ENCODE measurements at regions of chr15 and their contacts with region 1.

Region 1: GRCh38 chr15:67839929-67840748 is at the start of gene RNU6-1:
- DNase-seq: peak; percentile 92 to 97 (median 96)
- ATAC-seq: peak; percentile 78
- H3K4me3 ChIP-seq: peak within 1 kb of the TSS; percentile 87 to 89
- H3K4me3 Mint-ChIP-seq: peak within 1 kb of the TSS; percentile 91
- H3K27ac ChIP-seq: peak within 1 kb of the TSS; percentile 91 to 94
- H3K27ac Mint-ChIP-seq: peak within 1 kb of the TSS; percentile 97
- H3K4me1 ChIP-seq: peaks cover 31% of the 10 kb centered on the region
- H3K4me1 Mint-ChIP-seq: peaks cover 34% of the 10 kb centered on the region
- H3K27me3 ChIP-seq: peaks cover 11% of the 10 kb centered on the region in 2 experiments
- H3K27me3 Mint-ChIP-seq: peaks cover 5% of the 10 kb centered on the region
- CTCF ChIP-seq: no peak
- total RNA-seq, gene RNU6-1: not detected

Region 2: DNA sequence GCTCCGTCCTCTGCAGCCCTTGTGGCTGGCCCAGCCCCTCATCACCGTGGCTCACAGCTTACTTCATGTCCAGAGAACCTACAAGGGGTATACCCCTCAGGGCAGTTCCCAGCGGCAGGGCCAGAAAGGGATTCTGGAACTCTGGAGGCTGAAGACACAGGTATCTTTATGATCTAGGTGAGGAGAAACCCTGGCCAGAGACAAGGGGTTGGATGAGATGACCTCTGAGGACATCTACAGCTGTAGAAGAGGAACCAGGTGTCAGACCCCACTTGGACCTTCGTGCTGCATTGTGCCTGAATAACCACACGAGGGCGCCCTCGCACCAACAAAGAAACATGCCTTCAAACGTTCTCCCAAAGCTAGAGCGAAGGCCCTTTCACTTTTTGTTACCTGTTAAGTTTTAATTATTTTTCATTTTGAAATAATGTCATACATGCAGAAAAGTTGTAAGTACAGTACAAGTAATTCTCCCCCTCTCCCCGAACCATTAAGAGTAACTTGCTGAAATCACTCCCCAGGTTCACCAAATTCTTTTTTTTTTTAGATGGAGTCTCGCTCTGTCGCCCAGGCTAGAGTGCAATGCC is 893.5 kb before region 1 on chr15:
- CTCF ChIA-PET with region 1: interaction called, 7 read pairs
- POLR2A ChIA-PET with region 1: no interaction called
- intact Hi-C with region 1: loop called (anchors 2 to 5 kb)
- DNase-seq: peak; percentile 56 to 89 (median 74)
- ATAC-seq: peak; percentile 82
- H3K4me3 ChIP-seq: no peak overlapping the region
- H3K4me3 Mint-ChIP-seq: no peak overlapping the region
- H3K27ac ChIP-seq: no peak overlapping the region
- H3K27ac Mint-ChIP-seq: no peak overlapping the region
- H3K4me1 ChIP-seq: no peaks in the 10 kb centered on the region
- H3K4me1 Mint-ChIP-seq: peaks cover 3% of the 10 kb centered on the region
- H3K27me3 ChIP-seq: peaks cover 0 to 2% of the 10 kb centered on the region in 2 experiments
- H3K27me3 Mint-ChIP-seq: no peaks in the 10 kb centered on the region
- CTCF ChIP-seq: peak; percentile 97

Region 3: GRCh38 chr15:67456677-67457529 is 383.2 kb before region 1 on chr15:
- CTCF ChIA-PET with region 1: interaction called, 98 read pairs
- POLR2A ChIA-PET with region 1: interaction called, 6 read pairs
- intact Hi-C with region 1: loop called (anchors 1 kb)
- DNase-seq: peak; percentile 65 to 89 (median 81)
- ATAC-seq: peak; percentile 94
- H3K4me3 ChIP-seq: no peak overlapping the region
- H3K4me3 Mint-ChIP-seq: no peak overlapping the region
- H3K27ac ChIP-seq: no peak overlapping the region
- H3K27ac Mint-ChIP-seq: no peak overlapping the region
- H3K4me1 ChIP-seq: no peaks in the 10 kb centered on the region
- H3K4me1 Mint-ChIP-seq: peaks cover 3% of the 10 kb centered on the region
- H3K27me3 ChIP-seq: no peaks in the 10 kb centered on the region
- H3K27me3 Mint-ChIP-seq: no peaks in the 10 kb centered on the region
- CTCF ChIP-seq: peak; percentile 80

Region 4: GRCh38 chr15:67521029-67521811 is 318.9 kb before region 1 on chr15 and contains the start of gene C15orf61:
- CTCF ChIA-PET with region 1: interaction called, 4 read pairs
- POLR2A ChIA-PET with region 1: no interaction called
- intact Hi-C with region 1: loop called (anchors 1 to 5 kb)
- DNase-seq: peak; percentile 61 to 94 (median 84)
- ATAC-seq: peak; percentile 82
- H3K4me3 ChIP-seq: peak within 1 kb of the TSS; percentile 92 to 95
- H3K4me3 Mint-ChIP-seq: peak within 1 kb of the TSS; percentile 93
- H3K27ac ChIP-seq: peak within 1 kb of the TSS; percentile 72 to 92
- H3K27ac Mint-ChIP-seq: peak within 1 kb of the TSS; percentile 94
- H3K4me1 ChIP-seq: peaks cover 14% of the 10 kb centered on the region
- H3K4me1 Mint-ChIP-seq: peaks cover 36% of the 10 kb centered on the region
- H3K27me3 ChIP-seq: no peaks in the 10 kb centered on the region
- H3K27me3 Mint-ChIP-seq: no peaks in the 10 kb centered on the region
- CTCF ChIP-seq: no peak
- total RNA-seq, gene C15orf61: 11.2 to 14.4 TPM

Region 5: DNA sequence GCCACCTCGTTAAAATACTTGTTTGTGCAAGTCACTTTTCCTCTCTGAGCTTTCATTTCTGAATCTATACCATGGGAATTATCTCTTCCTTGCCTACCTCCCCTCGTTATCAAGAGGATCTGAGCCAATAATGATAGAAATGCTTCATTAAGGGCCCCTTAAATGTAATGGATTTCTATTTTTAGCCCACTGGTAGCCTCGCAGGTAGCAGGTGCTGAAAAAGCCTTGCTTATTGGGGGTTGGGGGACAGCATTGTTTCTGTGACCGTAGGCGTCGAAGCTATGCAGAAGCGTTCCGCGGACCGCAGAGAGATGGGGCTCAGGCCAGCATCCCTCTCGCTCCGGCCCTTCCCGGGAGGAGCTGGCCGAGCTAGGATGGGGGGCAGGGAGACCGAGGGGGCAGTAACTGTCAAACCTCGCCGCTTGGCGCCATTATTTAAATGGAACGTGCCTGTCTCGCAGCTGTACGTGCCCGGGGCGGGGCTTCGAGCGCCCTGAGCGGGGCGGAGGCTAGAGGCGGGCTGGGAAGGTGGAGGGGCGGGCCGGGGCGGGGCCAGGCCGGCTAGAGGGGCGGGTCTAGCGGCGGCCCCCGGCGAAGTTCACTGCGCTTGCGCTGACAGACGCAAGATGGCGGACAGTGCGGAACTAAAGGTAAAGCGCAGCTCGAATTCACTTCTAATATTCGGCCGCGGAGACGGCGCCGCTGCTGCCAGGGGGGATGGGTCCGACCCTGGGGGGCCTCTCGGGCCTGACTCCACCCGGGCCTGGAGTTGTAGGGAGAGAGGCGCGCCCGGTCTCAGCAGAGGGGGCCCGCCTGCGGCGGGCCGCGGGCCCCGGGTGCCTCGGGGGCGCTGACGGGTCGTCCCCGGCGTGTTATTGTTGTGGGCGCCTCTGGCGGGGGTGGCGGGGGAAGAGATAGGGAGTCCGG is 213.8 kb after region 1 on chr15 and contains the start of gene PIAS1:
- CTCF ChIA-PET with region 1: no interaction called
- POLR2A ChIA-PET with region 1: interaction called, 3 read pairs
- intact Hi-C with region 1: loop called in 1 of 2 experiments (anchors 2 kb)
- DNase-seq: peak; percentile 87 to 96 (median 93)
- ATAC-seq: peak; percentile 90
- H3K4me3 ChIP-seq: peak within 1 kb of the TSS; percentile 84 to 96
- H3K4me3 Mint-ChIP-seq: peak within 1 kb of the TSS; percentile 95
- H3K27ac ChIP-seq: peak within 1 kb of the TSS; percentile 79 to 85
- H3K27ac Mint-ChIP-seq: peak within 1 kb of the TSS; percentile 96
- H3K4me1 ChIP-seq: peaks cover 37% of the 10 kb centered on the region
- H3K4me1 Mint-ChIP-seq: peaks cover 47% of the 10 kb centered on the region
- H3K27me3 ChIP-seq: no peaks in the 10 kb centered on the region
- H3K27me3 Mint-ChIP-seq: peaks cover 2% of the 10 kb centered on the region
- CTCF ChIP-seq: no peak
- total RNA-seq, gene PIAS1: 73.9 to 78.5 TPM

Region 6: GRCh38 chr15:68130851-68131250 is 290.7 kb after region 1 on chr15:
- CTCF ChIA-PET with region 1: no interaction called
- POLR2A ChIA-PET with region 1: no interaction called
- intact Hi-C with region 1: no loop called
- DNase-seq: no peak
- ATAC-seq: no peak
- H3K4me3 ChIP-seq: no peak overlapping the region
- H3K4me3 Mint-ChIP-seq: no peak overlapping the region
- H3K27ac ChIP-seq: no peak overlapping the region
- H3K27ac Mint-ChIP-seq: no peak overlapping the region
- H3K4me1 ChIP-seq: no peaks in the 10 kb centered on the region
- H3K4me1 Mint-ChIP-seq: peaks cover 29% of the 10 kb centered on the region
- H3K27me3 ChIP-seq: no peaks in the 10 kb centered on the region
- H3K27me3 Mint-ChIP-seq: no peaks in the 10 kb centered on the region
- CTCF ChIP-seq: no peak

Region 7: DNA sequence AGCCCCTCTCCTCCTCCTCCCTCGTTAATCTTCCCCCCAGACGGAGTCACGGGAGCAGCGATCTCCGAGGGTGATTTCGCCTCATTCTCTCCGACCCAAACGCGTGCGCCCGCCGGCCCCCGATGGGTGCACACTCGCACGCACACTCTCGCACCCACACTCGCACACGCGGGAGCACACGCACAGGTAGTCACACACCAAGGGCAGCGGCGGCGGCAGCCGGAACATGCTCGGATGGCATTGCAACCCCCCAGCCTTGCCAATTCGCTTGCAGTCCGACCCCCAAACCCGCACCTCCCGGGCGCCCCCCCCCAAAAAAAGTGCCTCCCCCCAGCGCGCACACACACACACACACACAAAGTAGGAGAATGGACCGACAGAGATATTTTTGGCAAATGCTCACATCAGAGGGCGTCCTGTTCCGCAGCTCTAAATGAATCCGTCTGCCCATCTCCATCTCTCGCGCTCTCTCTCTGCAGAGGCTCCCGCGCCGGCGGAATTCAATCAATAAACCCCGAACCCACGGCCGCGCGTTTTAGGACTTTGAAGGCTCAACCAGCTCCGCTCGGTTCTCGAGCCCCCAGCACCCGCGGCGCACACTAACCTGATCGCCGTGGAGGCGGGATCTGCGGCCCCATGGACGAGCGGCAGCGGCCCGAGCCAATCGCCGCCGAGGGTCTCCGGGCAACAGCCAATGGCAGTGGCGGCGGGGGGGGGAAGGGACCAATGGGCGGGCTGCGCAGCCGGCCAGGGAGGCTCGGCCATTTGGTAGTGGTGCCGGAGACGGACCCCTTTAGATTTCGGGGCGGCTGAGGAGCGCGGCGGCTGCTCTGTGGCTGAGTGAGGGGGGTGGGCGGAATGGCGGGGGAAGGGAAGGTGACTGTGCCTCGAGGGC is 980.4 kb after region 1 on chr15 and contains the start of gene ANP32A:
- CTCF ChIA-PET with region 1: no interaction called
- POLR2A ChIA-PET with region 1: no interaction called
- intact Hi-C with region 1: loop called (anchors 5 to 10 kb)
- DNase-seq: peak; percentile 96 to 99 (median 97)
- ATAC-seq: peak; percentile 62
- H3K4me3 ChIP-seq: peak within 1 kb of the TSS; percentile 81 to 98
- H3K4me3 Mint-ChIP-seq: peak within 1 kb of the TSS; percentile 95
- H3K27ac ChIP-seq: peak within 1 kb of the TSS; percentile 59 to 74
- H3K27ac Mint-ChIP-seq: peak within 1 kb of the TSS; percentile 97
- H3K4me1 ChIP-seq: peaks cover 28% of the 10 kb centered on the region
- H3K4me1 Mint-ChIP-seq: peaks cover 31% of the 10 kb centered on the region
- H3K27me3 ChIP-seq: no peaks in the 10 kb centered on the region
- H3K27me3 Mint-ChIP-seq: no peaks in the 10 kb centered on the region
- CTCF ChIP-seq: no peak
- total RNA-seq, gene ANP32A: 47.6 to 51.9 TPM